Breast epithelium (tissue), 4 donors: ENCODE measurements at regions of chr6 and their contacts with region 1.

Region 1: GRCh38 chr6:31403283-31403989 is at the start of gene MICA:
- DNase-seq: peak; percentile 91 to 94
- H3K4me3 ChIP-seq: peak within 1 kb of the TSS; percentile 54 to 81 (median 73)
- H3K27ac ChIP-seq: peak within 1 kb of the TSS; percentile 89 to 98
- H3K4me1 ChIP-seq: peaks cover 4 to 9% of the 10 kb centered on the region in 2 donors
- H3K27me3 ChIP-seq: no peaks in the 10 kb centered on the region
- CTCF ChIP-seq: peak in 1 of 3 donors; percentile 32
- POLR2A ChIP-seq: peak; percentile 38
- total RNA-seq, gene MICA: 14.9 to 28.1 (median 23.6) TPM

Region 2: DNA sequence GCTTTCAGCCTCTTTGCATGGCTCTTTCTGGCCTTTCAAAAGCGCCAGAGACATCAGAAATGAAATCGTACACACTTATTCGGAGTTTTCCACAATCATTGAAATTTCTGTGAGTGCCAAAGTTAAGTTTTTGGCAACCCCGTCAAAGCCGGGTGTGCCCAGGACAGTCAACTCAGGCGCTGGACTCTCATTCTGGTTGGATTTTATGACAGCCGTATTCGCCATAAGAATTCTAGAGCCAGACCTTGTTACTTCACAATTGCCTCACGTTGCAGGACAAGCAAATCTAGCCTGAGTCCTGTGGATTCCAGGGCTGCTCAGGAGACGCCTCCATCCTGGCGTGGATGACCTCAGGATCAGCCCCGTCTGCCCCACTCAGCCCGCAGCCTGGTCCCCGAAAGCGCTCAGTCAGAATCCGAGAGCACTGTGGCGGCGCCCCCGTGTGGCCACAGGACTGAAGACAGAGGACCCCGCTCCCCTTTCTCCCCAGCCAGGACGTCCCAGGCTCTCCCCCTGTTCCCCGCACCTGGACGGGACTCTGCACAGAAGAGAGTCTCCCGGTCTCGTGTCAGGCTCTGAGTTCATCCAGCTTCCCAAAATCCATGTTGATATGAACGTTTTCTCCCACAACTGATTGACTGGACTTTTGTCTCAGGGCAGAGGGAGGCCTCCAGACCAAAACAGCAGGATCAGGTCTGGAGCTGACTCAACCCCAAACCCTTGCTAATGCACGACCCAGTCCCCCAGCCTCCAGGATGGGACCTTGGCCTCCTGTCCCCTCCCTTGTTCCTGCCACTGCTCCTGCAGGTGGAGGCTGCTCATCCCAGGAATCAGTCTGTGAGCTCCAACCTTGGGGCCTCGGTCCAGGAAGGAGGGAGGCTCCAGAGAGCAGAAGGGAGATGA is 38.2 kb after region 1 on chr6:
- intact Hi-C with region 1: loop called (anchors 5 kb)
- DNase-seq: peak; percentile 60 to 75
- H3K4me3 ChIP-seq: peak overlapping the region in 2 of 3 donors; percentile 9 to 42
- H3K27ac ChIP-seq: no peak overlapping the region
- H3K4me1 ChIP-seq: no peaks in the 10 kb centered on the region
- H3K27me3 ChIP-seq: no peaks in the 10 kb centered on the region
- CTCF ChIP-seq: peak; percentile 74 to 87 (median 76)
- POLR2A ChIP-seq: no peak